Right cardiac atrium (tissue), 5 donors: ENCODE measurements at regions of chr10 and their contacts with region 1.

Region 1: GRCh38 chr10:110893559-110894179 is 21.9 kb downstream of the PDCD4 start:
- DNase-seq: no peak
- ATAC-seq: peak; percentile 78 to 79
- H3K4me3 ChIP-seq: no peak overlapping the region
- H3K27ac ChIP-seq: no peak overlapping the region
- H3K4me1 ChIP-seq: no peaks in the 10 kb centered on the region
- H3K27me3 ChIP-seq: no peaks in the 10 kb centered on the region

Region 2: DNA sequence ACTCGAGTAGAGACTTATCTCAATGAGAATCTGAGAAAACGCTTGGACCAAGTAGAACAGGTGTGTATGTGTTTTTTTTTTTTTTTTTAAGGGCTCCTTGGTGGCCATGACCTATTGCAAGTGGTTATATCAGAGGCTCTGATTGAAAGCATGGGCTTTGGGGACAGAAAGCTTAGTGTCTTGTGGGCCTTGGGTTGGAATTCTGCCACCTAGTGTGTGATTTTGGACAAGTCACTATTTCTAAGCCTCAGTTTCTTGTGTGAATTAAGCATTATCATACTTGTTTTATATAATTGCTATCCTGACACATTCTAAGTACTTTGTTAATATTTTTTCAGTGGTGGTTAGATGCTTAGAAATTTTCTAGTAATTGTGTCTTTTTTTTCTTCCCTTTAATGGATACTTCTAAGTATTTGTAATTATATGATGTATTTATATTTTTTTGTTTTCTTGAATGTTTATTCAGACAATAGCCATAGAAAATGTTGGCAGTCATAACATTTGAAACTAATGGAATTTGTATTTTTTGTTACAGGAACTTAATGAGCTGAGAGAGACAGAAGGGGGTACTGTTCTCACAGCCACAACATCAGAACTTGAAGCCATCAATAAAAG is 293.1 kb before region 1 on chr10:
- intact Hi-C with region 1: loop called in 3 of 4 experiments (anchors 5 to 10 kb)
- DNase-seq: no peak
- ATAC-seq: peak in 1 of 2 donors; percentile 44
- H3K4me3 ChIP-seq: no peak overlapping the region
- H3K27ac ChIP-seq: no peak overlapping the region
- H3K4me1 ChIP-seq: no peaks in the 10 kb centered on the region
- H3K27me3 ChIP-seq: no peaks in the 10 kb centered on the region

Region 3: GRCh38 chr10:110610308-110610774 is 283.3 kb before region 1 on chr10:
- intact Hi-C with region 1: loop called (anchors 5 to 10 kb)
- DNase-seq: no peak
- ATAC-seq: peak; percentile 40 to 46
- H3K4me3 ChIP-seq: no peak overlapping the region
- H3K27ac ChIP-seq: no peak overlapping the region
- H3K4me1 ChIP-seq: no peaks in the 10 kb centered on the region
- H3K27me3 ChIP-seq: no peaks in the 10 kb centered on the region

Region 4: DNA sequence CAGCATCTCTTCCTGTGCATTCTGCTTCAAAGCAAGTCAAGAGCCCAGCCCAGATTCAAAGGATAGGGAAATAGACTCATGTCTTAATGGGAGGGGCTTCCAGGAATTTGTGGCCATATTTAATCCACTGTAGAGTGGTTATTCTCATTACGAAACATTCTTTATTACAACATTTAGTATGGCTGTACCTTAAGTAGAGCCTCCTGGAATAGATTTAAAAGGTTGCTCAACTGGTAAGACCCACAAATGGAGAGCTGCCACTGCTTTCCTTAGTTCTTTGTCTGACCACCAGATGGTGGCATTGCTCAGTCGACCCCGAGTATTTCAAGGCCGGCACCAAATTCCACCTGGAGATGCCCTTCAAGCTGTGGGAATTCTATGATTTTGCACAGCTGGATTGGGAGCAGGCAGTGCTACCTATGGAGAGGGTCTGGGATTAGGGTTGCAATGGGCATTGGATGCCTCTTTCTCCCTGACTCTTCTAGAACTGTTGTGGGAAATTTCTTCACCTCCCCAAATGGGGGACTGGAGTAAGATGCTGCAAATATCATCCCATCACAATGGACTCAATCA is 147.3 kb before region 1 on chr10:
- intact Hi-C with region 1: loop called (anchors 5 to 10 kb)
- DNase-seq: peak in 2 of 3 donors; percentile 50 to 70
- ATAC-seq: peak; percentile 45 to 61
- H3K4me3 ChIP-seq: no peak overlapping the region
- H3K27ac ChIP-seq: peak overlapping the region; percentile 53
- H3K4me1 ChIP-seq: peaks cover 13% of the 10 kb centered on the region
- H3K27me3 ChIP-seq: no peaks in the 10 kb centered on the region

Region 5: DNA sequence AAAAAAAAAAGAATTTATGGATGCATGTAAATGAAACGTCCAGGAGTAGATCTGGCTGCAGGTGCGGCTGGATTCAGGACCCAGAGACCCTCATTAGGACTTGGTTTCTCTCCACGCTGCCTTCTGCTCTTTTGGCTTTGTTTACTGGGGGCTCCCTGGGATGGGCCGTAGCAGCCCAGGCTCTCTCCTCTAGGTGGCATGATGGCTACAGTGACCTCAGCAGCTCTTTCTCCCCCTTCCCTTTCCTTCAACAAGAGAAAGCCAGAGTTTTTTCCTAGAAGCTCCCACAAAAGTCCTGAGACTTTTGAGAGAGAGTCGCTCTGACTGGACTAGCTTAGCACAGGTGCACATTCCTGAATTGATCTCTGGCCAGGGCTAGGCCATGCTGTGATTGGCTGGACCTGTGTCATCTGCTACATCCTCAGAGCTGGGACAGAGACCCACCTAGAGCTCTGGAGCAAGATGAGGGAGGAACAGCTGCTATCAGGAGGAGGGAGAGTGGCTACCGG is 89.8 kb before region 1 on chr10:
- intact Hi-C with region 1: loop called in 2 of 4 experiments (anchors 5 kb)
- DNase-seq: peak; percentile 52 to 85 (median 79)
- ATAC-seq: peak; percentile 78 to 81
- H3K4me3 ChIP-seq: no peak overlapping the region
- H3K27ac ChIP-seq: peak overlapping the region; percentile 56
- H3K4me1 ChIP-seq: peaks cover 15% of the 10 kb centered on the region
- H3K27me3 ChIP-seq: no peaks in the 10 kb centered on the region